ENCODE measurements at regions of chr2 and their contacts with region 1.

Region 1: DNA sequence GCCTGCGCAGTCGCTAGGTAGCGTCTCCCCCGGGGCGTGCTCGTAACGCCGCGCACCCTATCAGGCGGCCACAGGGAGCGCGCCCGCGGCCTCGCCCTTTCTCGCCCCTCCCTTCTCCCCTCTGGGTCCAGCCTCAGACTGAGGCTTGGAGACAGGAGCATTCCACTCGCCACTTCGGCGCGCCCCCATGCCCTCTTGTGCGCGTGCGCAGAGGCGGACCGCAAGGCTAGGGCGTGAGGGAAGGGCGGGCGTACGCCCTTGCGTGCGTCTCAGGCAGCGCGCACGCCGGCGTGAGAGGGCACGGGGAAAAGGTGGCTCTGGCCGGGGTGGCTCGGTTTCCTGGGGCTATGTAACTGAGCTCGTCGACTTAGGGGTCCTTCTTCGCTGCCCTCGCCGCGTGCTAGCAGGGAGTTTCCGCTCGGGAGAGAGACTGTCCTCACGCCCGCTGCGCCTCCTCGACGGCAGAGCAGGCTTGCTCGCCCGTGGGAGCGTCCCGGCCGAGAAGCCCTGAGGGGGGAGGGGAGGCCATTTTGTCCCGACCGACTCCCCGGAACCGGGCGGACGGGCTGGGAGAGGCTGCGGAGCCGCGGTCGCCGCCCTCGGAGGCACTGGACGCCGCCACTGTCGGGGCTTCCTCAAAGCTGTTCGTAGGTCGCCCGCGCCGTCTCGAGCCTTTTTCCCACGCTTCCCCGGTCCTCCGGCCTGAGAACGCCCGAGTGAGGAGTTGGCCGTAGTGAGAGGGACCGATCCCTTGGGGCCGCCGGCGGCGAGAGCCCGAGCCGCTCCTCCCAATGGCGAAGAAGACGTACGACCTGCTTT is at the start of gene RAB10:
- DNase-seq: peak; percentile 99
- H3K4me3 ChIP-seq: peak within 1 kb of the TSS; percentile 94 to 99
- H3K4me3 Mint-ChIP-seq: peak within 1 kb of the TSS; percentile 94 to 99 (median 97)
- H3K27ac ChIP-seq: peak within 1 kb of the TSS; percentile 86
- H3K27ac Mint-ChIP-seq: peak within 1 kb of the TSS; percentile 89 to 99 (median 97)
- H3K4me1 ChIP-seq: peaks cover 42% of the 10 kb centered on the region
- H3K4me1 Mint-ChIP-seq: peaks cover 16 to 46% (median 36%) of the 10 kb centered on the region in 4 donors
- H3K27me3 ChIP-seq: no peaks in the 10 kb centered on the region
- H3K27me3 Mint-ChIP-seq: no peaks in the 10 kb centered on the region
- total RNA-seq, gene RAB10: 67.8 to 77.2 TPM

Region 2: DNA sequence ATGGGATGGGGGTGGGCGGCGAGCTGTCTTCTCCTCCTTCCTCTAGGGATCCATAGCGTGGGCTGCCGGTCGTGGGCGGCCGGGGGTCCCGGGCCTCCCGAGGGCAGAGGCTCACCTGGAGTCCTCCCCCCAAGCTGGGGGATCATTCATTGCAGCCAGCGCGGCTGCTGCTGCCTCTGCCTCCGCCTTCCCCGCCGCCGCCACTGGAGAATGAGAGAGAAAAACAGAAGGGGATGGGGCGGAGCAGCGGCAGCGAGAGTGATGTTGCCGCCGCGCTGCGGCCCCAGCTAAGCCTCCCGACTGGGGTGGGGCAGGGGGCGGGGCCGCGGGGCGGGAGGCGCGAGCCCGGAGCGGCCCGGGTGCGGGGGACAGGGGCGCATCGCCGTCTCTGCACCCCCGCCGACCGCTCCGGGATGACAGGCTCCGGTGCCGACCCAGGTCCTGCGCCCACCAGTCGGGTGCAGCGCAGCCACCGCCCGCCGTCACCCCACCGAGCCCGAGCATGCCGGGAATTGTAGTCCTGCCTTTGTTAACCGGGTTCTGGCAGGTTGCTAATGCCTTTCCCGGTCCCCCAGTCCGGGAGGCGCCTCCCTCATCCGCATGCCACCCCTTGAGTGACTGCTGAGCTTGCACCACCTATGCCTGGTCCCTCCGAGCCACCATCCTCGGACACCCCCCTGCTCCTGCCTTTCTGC is 51.6 kb before region 1 on chr2 and contains the start of gene KIF3C:
- CTCF ChIA-PET with region 1: no interaction called
- POLR2A ChIA-PET with region 1: interaction called, 14 read pairs
- intact Hi-C with region 1: loop called (anchors 1 kb)
- DNase-seq: peak; percentile 71 to 81 (median 74)
- H3K4me3 ChIP-seq: peak within 1 kb of the TSS; percentile 36 to 66
- H3K4me3 Mint-ChIP-seq: peak within 1 kb of the TSS; percentile 83 to 92 (median 87)
- H3K27ac ChIP-seq: peak within 1 kb of the TSS; percentile 44
- H3K27ac Mint-ChIP-seq: peak within 1 kb of the TSS; percentile 36 to 89 (median 75)
- H3K4me1 ChIP-seq: peaks cover 11% of the 10 kb centered on the region
- H3K4me1 Mint-ChIP-seq: peaks cover 4 to 20% (median 9%) of the 10 kb centered on the region in 4 donors
- H3K27me3 ChIP-seq: no peaks in the 10 kb centered on the region
- H3K27me3 Mint-ChIP-seq: no peaks in the 10 kb centered on the region
- total RNA-seq, gene KIF3C: 4.1 to 5.1 TPM

Region 3: GRCh38 chr2:26043862-26044696 is 10.1 kb after region 1 on chr2:
- CTCF ChIA-PET with region 1: interaction called, 3 read pairs
- POLR2A ChIA-PET with region 1: interaction called, 12 read pairs
- intact Hi-C with region 1: loop called (anchors 1 kb)
- DNase-seq: peak in 3 of 5 donors; percentile 16 to 36 (median 19)
- H3K4me3 ChIP-seq: peak overlapping the region in 1 of 2 donors; percentile 5
- H3K4me3 Mint-ChIP-seq: peak overlapping the region; percentile 14 to 90 (median 64)
- H3K27ac ChIP-seq: peak overlapping the region; percentile 11
- H3K27ac Mint-ChIP-seq: peak overlapping the region; percentile 10 to 69 (median 48)
- H3K4me1 ChIP-seq: peaks cover 66% of the 10 kb centered on the region
- H3K4me1 Mint-ChIP-seq: peaks cover 43 to 74% (median 59%) of the 10 kb centered on the region in 4 donors
- H3K27me3 ChIP-seq: no peaks in the 10 kb centered on the region
- H3K27me3 Mint-ChIP-seq: no peaks in the 10 kb centered on the region

Region 4: DNA sequence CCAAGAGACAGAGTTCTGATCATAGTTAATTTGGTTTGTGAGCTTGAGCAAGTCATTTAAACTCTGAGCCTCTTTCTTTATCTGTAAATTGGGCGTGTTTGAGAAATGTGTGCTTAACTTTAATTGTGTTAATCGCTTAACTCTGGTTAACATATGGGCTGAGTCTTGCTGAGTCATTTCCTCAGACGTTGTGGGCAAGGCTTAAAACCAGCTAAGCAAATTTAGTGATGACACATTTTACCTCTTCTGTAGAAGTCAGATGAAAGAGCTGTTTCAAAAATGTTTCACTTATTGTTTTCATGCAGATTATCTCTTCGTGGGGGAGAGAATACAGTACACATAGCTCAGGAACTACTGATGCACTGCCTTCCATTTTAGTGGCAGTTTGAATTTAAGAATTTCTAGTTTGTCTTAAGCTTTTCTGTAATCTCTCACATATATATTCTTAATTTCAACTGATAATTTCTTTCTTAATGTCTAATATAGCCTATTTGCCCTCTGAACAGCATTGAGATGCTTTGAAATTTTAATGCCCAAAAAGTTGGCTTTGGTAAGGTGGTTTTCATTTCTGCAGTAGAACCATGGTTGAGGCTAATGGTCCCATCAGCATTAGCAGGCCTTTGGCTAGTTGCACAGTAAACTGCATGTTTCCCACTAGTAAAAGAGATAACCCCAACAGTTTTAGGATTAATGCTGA is 34.7 kb after region 1 on chr2:
- CTCF ChIA-PET with region 1: no interaction called
- POLR2A ChIA-PET with region 1: interaction called, 16 read pairs
- intact Hi-C with region 1: loop called (anchors 1 kb)
- DNase-seq: peak; percentile 43 to 77 (median 47)
- H3K4me3 ChIP-seq: no peak overlapping the region
- H3K4me3 Mint-ChIP-seq: peak overlapping the region in 6 of 8 donors; percentile 1 to 75 (median 22)
- H3K27ac ChIP-seq: no peak overlapping the region
- H3K27ac Mint-ChIP-seq: peak overlapping the region; percentile 10 to 89 (median 50)
- H3K4me1 ChIP-seq: peaks cover 52% of the 10 kb centered on the region
- H3K4me1 Mint-ChIP-seq: peaks cover 39 to 58% (median 48%) of the 10 kb centered on the region in 4 donors
- H3K27me3 ChIP-seq: no peaks in the 10 kb centered on the region
- H3K27me3 Mint-ChIP-seq: no peaks in the 10 kb centered on the region